Dendritic cell treated with granulocyte-macrophage colony-stimulating factor and Interleukin-4, amounts not matched to agents 40 ng/mL and 50 ng/mL, for 4 days (primary cell): ENCODE measurements at regions of chr3 and their contacts with region 1.

Region 1: GRCh38 chr3:175093748-175094147 is 234.6 kb downstream of the NAALADL2 start:
- H3K4me3 Mint-ChIP-seq: no peak overlapping the region
- H3K27ac Mint-ChIP-seq: no peak overlapping the region
- H3K4me1 Mint-ChIP-seq: no peaks in the 10 kb centered on the region
- H3K27me3 Mint-ChIP-seq: no peaks in the 10 kb centered on the region

Region 2: DNA sequence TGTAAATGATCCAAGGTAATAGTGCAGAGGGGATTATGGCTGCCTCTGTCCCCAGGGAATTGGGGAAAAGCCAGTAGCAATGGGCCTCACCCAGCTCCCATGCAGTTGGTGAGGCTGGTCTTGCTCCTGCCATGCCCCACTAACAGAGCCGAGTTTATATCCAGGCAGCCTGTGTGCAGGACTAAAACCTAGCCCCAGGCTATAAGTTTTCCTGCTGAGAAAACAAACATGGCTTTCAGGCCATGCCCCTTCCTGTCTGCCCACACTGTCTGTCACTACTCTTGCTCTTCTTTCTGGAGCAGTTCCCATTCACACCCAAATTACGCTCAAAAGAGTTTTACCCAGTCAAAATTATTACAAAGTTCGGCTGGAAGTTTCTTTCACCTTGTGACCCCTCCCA is 1879.2 kb before region 1 on chr3:
- intact Hi-C with region 1: loop called (anchors 5 kb)
- H3K4me3 Mint-ChIP-seq: no peak overlapping the region
- H3K27ac Mint-ChIP-seq: no peak overlapping the region
- H3K4me1 Mint-ChIP-seq: no peaks in the 10 kb centered on the region
- H3K27me3 Mint-ChIP-seq: no peaks in the 10 kb centered on the region

Region 3: DNA sequence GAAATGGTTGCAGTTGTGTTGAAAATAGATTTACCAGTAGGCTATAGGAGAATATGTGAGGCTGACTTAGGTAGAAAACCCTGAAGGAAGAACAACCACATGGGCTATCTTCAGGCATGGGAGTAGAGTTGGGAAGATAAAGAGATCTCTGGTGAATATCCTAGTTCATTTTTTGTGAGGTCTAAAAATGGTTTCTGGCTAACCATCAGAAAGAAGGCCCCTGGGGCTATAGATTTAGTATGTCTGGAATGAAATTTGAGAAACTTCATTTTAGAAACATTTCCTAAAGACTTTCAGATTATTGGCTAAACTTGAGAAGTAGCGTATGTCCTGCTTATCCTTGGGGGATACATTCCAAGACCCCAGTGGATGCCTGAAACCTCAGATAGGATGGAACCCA is 86.4 kb before region 1 on chr3:
- intact Hi-C with region 1: no loop called
- H3K4me3 Mint-ChIP-seq: no peak overlapping the region
- H3K27ac Mint-ChIP-seq: no peak overlapping the region
- H3K4me1 Mint-ChIP-seq: no peaks in the 10 kb centered on the region
- H3K27me3 Mint-ChIP-seq: no peaks in the 10 kb centered on the region